Esophagus squamous epithelium (tissue), 5 donors: ENCODE measurements at regions of chrX and their contacts with region 1.

Region 1: GRCh38 chrX:37926700-37927099 is 79.3 kb upstream of the DYNLT3 start:
- DNase-seq: no peak
- H3K4me3 ChIP-seq: no peak overlapping the region
- H3K27ac ChIP-seq: no peak overlapping the region
- H3K4me1 ChIP-seq: no peaks in the 10 kb centered on the region
- H3K27me3 ChIP-seq: no peaks in the 10 kb centered on the region
- CTCF ChIP-seq: peak in 5 of 6 experiments; percentile 43 to 62 (median 49)
- POLR2A ChIP-seq: no peak

Region 2: DNA sequence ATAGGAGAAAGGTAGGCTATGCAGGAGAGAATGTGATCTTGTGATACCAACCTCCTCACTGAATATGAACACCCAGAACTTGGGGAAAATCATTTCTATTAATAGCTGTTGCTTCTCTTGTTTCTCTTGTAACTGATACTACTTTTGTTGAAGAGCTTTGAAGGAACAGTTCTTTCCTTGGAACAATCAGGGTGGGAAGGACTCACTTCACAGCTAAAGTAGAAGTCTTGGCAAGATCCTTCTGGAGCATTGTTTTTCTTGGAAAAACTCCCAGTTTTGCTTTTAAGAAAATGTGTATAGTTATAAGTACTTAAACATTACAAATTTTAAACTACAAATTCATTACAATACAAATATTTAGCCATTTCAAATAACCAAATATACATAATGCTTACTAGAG is 260.2 kb before region 1 on chrX:
- intact Hi-C with region 1: no loop called
- DNase-seq: no peak
- H3K4me3 ChIP-seq: no peak overlapping the region
- H3K27ac ChIP-seq: no peak overlapping the region
- H3K4me1 ChIP-seq: no peaks in the 10 kb centered on the region
- H3K27me3 ChIP-seq: no peaks in the 10 kb centered on the region
- CTCF ChIP-seq: no peak
- POLR2A ChIP-seq: no peak

Region 3: DNA sequence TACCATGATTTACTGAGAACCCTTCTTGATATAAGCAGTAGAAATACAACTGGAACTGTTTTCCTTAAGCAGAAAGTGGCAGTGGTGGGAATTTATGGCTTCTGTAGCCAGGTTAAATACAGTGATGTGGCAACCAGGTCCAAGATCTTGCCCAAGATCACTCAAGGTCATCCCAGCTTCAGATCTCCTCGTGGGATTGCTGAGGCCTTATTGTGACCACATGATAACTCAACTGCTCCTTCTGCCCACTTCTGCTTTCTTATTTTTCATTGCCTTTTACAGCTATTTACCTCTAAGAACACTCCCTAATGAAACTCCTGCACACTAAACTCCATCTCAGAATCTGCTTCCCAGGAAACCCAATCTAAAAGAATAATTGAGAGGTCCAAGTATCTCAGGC is 159.3 kb before region 1 on chrX:
- intact Hi-C with region 1: no loop called
- DNase-seq: no peak
- H3K4me3 ChIP-seq: no peak overlapping the region
- H3K27ac ChIP-seq: no peak overlapping the region
- H3K4me1 ChIP-seq: no peaks in the 10 kb centered on the region
- H3K27me3 ChIP-seq: no peaks in the 10 kb centered on the region
- CTCF ChIP-seq: no peak
- POLR2A ChIP-seq: no peak

Region 4: GRCh38 chrX:38172590-38172989 is 245.9 kb after region 1 on chrX:
- intact Hi-C with region 1: loop called (anchors 5 kb)
- DNase-seq: no peak
- H3K4me3 ChIP-seq: no peak overlapping the region
- H3K27ac ChIP-seq: no peak overlapping the region
- H3K4me1 ChIP-seq: no peaks in the 10 kb centered on the region
- H3K27me3 ChIP-seq: no peaks in the 10 kb centered on the region
- CTCF ChIP-seq: no peak
- POLR2A ChIP-seq: no peak